ENCODE measurements at regions of chr22 and their contacts with region 1.

Region 1: DNA sequence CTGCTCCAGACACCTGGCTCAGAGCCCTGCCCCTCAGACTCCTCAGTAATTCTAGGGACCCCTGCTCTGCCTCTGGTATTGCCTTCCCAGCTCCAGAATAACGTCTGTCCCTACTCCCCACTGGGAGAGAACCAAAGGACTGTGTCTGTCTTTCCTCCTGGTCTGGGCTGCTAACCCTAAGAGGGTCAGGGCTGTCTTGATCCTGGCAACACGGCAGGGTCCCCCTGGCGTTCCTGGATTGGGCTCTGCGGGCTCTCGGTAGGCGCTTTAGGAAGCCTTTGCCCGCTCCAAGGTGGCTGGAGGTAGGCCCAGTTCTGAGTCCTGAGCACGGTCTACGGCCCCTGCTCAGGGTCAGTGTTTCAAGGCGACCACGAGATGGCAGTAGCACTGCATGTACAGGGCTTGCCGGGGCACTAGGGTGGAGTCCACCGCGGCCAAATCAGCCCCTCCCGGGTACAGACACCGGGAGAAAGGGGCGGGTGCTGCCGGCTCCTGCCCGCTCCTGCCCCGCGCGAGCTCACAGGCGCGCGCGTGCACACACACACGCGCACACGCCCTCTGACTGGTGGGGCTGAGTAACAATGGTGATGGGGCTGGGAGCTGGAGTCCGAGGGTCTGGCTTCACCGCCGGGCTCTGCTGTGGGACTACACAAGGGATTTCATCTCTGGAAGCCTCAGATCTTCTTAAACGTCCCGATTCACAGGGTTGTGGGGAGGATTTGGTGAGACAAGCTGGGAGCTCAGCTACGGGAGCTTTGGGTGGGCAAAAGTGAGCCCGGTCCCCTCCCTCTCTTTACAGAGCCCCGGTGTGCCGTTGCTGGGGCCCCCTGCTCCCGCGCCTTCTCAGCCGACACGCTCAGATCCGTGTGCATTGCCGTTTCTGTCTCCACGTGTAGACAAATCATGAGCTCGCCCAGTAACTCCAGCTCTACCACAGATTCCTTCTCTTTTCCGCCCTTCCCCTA is 30.1 kb upstream of the HMOX1 start:
- DNase-seq: peak; percentile 58
- ATAC-seq: peak; percentile 90
- H3K4me3 ChIP-seq: peak overlapping the region; percentile 77
- H3K27ac ChIP-seq: peak overlapping the region; percentile 18; the same call in 1 of the 2 replicates
- H3K4me1 ChIP-seq: peaks cover 34% of the 10 kb centered on the region
- H3K27me3 ChIP-seq: no peaks in the 10 kb centered on the region
- CTCF ChIP-seq: peak; percentile 80 to 97 (median 87)
- EP300 ChIP-seq: no peak
- POLR2A ChIP-seq: no peak
- RAD21 ChIP-seq: peak; percentile 94

Region 2: DNA sequence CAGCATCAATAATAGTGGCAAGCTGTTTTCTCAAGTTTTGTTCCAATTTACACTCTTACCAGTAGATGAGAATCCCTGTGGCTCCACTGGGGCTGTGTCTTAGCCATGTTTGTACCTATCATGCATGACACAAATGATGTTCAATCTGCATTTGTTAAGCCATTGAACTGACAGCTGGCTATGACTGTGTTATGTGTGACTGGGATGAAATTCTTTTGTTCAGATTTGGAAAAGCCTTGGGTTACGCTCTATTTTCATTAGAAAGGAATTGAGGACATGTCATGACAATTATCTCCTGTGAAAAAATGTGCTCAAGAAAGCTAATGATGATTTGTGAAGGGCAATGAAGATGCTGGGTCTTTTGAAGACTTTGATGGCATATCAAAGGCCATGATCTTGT is 1228.8 kb before region 1 on chr22:
- CTCF ChIA-PET with region 1: no interaction called
- POLR2A ChIA-PET with region 1: no interaction called
- RAD21 ChIA-PET with region 1: no interaction called
- SMC1A ChIA-PET with region 1: no interaction called
- in situ Hi-C with region 1: no loop called
- intact Hi-C with region 1: no loop called
- DNase-seq: no peak
- ATAC-seq: no peak
- H3K4me3 ChIP-seq: no peak overlapping the region
- H3K27ac ChIP-seq: no peak overlapping the region
- H3K4me1 ChIP-seq: no peaks in the 10 kb centered on the region
- H3K27me3 ChIP-seq: no peaks in the 10 kb centered on the region
- CTCF ChIP-seq: no peak
- EP300 ChIP-seq: no peak
- POLR2A ChIP-seq: no peak
- RAD21 ChIP-seq: no peak

Region 3: DNA sequence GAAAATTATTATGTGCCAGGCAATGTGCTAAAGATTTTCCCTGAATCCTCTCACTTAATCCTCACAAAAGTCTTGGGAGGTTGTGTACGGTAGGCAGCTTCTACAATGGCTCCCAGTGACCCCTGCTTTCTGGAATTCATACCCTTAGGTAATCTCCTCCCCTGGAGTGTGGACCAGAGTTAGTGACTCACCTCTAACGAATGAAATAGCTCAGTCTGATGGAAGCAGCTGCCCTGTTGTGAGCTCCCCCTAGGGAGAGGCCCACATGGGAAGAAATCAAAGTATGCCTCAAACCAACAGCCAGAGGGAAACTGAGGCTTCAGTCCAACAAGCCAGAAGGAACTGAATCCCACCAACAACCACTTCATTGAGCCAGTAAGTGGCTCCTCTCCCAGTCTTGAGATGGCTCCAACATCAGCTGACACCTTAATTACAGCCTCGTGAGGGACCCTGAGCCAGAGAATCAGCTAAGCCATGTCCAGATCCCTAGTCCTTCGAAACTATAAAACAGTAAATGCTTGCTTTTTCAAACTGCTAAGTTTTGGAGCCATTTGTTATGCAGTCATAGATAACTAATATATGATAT is 383.7 kb before region 1 on chr22:
- CTCF ChIA-PET with region 1: no interaction called
- POLR2A ChIA-PET with region 1: no interaction called
- RAD21 ChIA-PET with region 1: no interaction called
- SMC1A ChIA-PET with region 1: no interaction called
- in situ Hi-C with region 1: no loop called
- intact Hi-C with region 1: no loop called
- DNase-seq: no peak
- ATAC-seq: no peak
- H3K4me3 ChIP-seq: no peak overlapping the region
- H3K27ac ChIP-seq: no peak overlapping the region
- H3K4me1 ChIP-seq: no peaks in the 10 kb centered on the region
- H3K27me3 ChIP-seq: no peaks in the 10 kb centered on the region
- CTCF ChIP-seq: no peak
- EP300 ChIP-seq: no peak
- POLR2A ChIP-seq: no peak
- RAD21 ChIP-seq: no peak

Region 4: DNA sequence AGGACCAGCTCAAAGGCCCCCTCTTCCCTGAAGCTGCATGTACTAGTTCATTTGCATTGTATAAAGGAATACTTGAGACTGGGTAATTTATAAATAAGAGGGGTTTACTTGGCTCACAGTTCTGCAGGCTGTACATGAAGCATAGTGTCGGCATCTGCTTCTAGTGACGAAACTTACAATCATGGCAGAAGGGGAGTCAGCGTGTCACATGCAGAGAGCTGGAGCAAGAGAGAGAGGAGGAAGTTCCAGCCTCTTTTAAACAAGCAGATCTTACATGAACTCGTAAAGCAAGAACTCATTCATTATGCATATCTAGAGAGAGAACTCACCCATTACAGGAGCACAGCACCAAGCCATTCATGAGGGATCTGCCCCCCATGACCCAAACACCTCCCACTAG is 100.7 kb before region 1 on chr22:
- CTCF ChIA-PET with region 1: no interaction called
- POLR2A ChIA-PET with region 1: no interaction called
- RAD21 ChIA-PET with region 1: no interaction called
- SMC1A ChIA-PET with region 1: no interaction called
- in situ Hi-C with region 1: no loop called
- intact Hi-C with region 1: no loop called
- DNase-seq: no peak
- ATAC-seq: no peak
- H3K4me3 ChIP-seq: no peak overlapping the region
- H3K27ac ChIP-seq: no peak overlapping the region
- H3K4me1 ChIP-seq: no peaks in the 10 kb centered on the region
- H3K27me3 ChIP-seq: no peaks in the 10 kb centered on the region
- CTCF ChIP-seq: no peak
- EP300 ChIP-seq: no peak
- POLR2A ChIP-seq: no peak
- RAD21 ChIP-seq: no peak

Region 5: GRCh38 chr22:35318346-35319215 is 32.2 kb before region 1 on chr22:
- CTCF ChIA-PET with region 1: no interaction called
- POLR2A ChIA-PET with region 1: no interaction called
- RAD21 ChIA-PET with region 1: no interaction called
- SMC1A ChIA-PET with region 1: no interaction called
- in situ Hi-C with region 1: no loop called
- intact Hi-C with region 1: no loop called
- DNase-seq: no peak
- ATAC-seq: no peak
- H3K4me3 ChIP-seq: no peak overlapping the region
- H3K27ac ChIP-seq: no peak overlapping the region
- H3K4me1 ChIP-seq: peaks cover 8% of the 10 kb centered on the region
- H3K27me3 ChIP-seq: no peaks in the 10 kb centered on the region
- CTCF ChIP-seq: no peak
- EP300 ChIP-seq: no peak
- POLR2A ChIP-seq: no peak
- RAD21 ChIP-seq: no peak

Region 6: DNA sequence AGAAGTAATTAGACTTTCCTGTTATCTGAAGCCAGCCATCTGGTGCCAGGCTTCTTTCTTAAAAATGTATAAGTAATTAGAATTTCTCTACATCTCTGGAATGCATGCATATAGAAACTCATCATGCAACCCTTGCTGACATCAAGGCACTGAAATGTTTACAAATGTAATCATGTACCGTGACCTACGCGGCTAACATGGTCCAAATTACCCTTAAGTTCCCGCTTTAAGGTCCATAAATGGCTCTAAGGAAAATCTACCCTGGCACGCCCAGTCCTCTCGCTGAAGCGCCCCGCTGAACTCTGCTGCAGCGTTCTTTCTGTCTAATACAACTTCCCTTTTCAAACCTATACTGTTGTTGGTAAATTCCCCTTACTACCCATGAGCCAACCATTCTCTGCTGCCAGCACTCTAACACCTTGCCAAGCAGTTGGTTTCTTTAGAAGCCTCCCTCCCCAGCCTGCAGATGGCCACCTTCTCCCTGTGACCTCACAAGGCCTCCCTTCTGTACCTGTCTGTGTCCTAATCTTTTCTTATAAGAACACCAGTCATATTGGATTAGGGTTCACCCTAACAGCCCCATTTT is 16.6 kb after region 1 on chr22:
- CTCF ChIA-PET with region 1: interaction called, 10 read pairs
- POLR2A ChIA-PET with region 1: interaction called, 7 read pairs
- RAD21 ChIA-PET with region 1: interaction called, 6 read pairs
- SMC1A ChIA-PET with region 1: interaction called, 10 read pairs
- in situ Hi-C with region 1: no loop called
- intact Hi-C with region 1: no loop called
- DNase-seq: peak; percentile 65
- ATAC-seq: peak; percentile 90
- H3K4me3 ChIP-seq: no peak overlapping the region
- H3K27ac ChIP-seq: no peak overlapping the region
- H3K4me1 ChIP-seq: peaks cover 19% of the 10 kb centered on the region
- H3K27me3 ChIP-seq: no peaks in the 10 kb centered on the region
- CTCF ChIP-seq: peak in 2 of 3 experiments; percentile 7 to 42; a peak in 2 of 6 replicates
- EP300 ChIP-seq: no peak
- POLR2A ChIP-seq: no peak
- RAD21 ChIP-seq: no peak

Region 7: DNA sequence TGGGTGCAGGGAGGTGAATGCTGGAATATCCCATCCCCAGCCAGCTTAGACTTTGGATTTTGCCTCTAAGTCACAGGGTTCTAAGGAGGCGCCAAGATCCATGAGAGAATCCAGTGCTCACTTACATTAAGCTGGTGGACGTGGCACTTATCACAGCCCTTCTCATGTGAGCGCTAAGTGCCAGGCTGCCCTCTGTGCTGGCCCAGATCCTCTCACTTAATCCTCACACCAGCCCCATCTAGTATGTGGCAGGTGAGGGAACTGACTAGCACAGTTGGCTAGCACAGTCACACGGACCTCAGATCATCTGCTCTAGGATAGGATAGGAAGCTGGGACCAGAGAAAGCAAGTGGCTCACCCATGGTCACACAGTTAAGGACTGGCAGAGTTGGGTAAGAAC is 33.7 kb after region 1 on chr22:
- CTCF ChIA-PET with region 1: interaction called, 23 read pairs
- POLR2A ChIA-PET with region 1: no interaction called
- RAD21 ChIA-PET with region 1: interaction called, 23 read pairs
- SMC1A ChIA-PET with region 1: interaction called, 12 read pairs
- in situ Hi-C with region 1: no loop called
- intact Hi-C with region 1: no loop called
- DNase-seq: no peak
- ATAC-seq: peak; percentile 33
- H3K4me3 ChIP-seq: no peak overlapping the region
- H3K27ac ChIP-seq: no peak overlapping the region
- H3K4me1 ChIP-seq: peaks cover 8% of the 10 kb centered on the region; the same call in 1 of the 2 replicates
- H3K27me3 ChIP-seq: no peaks in the 10 kb centered on the region
- CTCF ChIP-seq: no peak
- EP300 ChIP-seq: no peak
- POLR2A ChIP-seq: no peak
- RAD21 ChIP-seq: no peak

Region 8: GRCh38 chr22:35409783-35410662 is 59.2 kb after region 1 on chr22:
- CTCF ChIA-PET with region 1: interaction called, 78 read pairs
- POLR2A ChIA-PET with region 1: interaction called, 18 read pairs
- RAD21 ChIA-PET with region 1: interaction called, 112 read pairs
- SMC1A ChIA-PET with region 1: interaction called, 67 read pairs
- in situ Hi-C with region 1: no loop called
- intact Hi-C with region 1: loop called (anchors 1 kb)
- DNase-seq: peak; percentile 91
- ATAC-seq: peak; percentile 91
- H3K4me3 ChIP-seq: peak overlapping the region; percentile 45; the same call in 1 of the 2 replicates
- H3K27ac ChIP-seq: peak overlapping the region; percentile 83
- H3K4me1 ChIP-seq: peaks cover 27% of the 10 kb centered on the region
- H3K27me3 ChIP-seq: no peaks in the 10 kb centered on the region
- CTCF ChIP-seq: no peak
- EP300 ChIP-seq: peak; percentile 53 to 76; a peak in 3 of 4 replicates
- POLR2A ChIP-seq: peak; percentile 65
- RAD21 ChIP-seq: peak; percentile 22; the same call in 1 of the 2 replicates

Region 9: GRCh38 chr22:35582861-35583670 is 232.2 kb after region 1 on chr22:
- CTCF ChIA-PET with region 1: interaction called, 91 read pairs
- POLR2A ChIA-PET with region 1: interaction called, 3 read pairs
- RAD21 ChIA-PET with region 1: interaction called, 30 read pairs
- SMC1A ChIA-PET with region 1: interaction called, 19 read pairs
- in situ Hi-C with region 1: loop called (anchors 5 kb)
- intact Hi-C with region 1: loop called (anchors 1 kb)
- DNase-seq: peak; percentile 7
- ATAC-seq: peak; percentile 93
- H3K4me3 ChIP-seq: no peak overlapping the region
- H3K27ac ChIP-seq: no peak overlapping the region
- H3K4me1 ChIP-seq: no peaks in the 10 kb centered on the region
- H3K27me3 ChIP-seq: no peaks in the 10 kb centered on the region; a peak in 1 of 4 replicates
- CTCF ChIP-seq: peak; percentile 87 to 94 (median 89)
- EP300 ChIP-seq: no peak
- POLR2A ChIP-seq: no peak
- RAD21 ChIP-seq: peak; percentile 86

Region 10: GRCh38 chr22:35627264-35628041 is 276.6 kb after region 1 on chr22:
- CTCF ChIA-PET with region 1: interaction called, 12 read pairs
- POLR2A ChIA-PET with region 1: interaction called, 3 read pairs
- RAD21 ChIA-PET with region 1: interaction called, 11 read pairs
- SMC1A ChIA-PET with region 1: interaction called, 3 read pairs
- in situ Hi-C with region 1: loop called (anchors 5 kb)
- intact Hi-C with region 1: loop called (anchors 1 kb)
- DNase-seq: no peak
- ATAC-seq: peak; percentile 70
- H3K4me3 ChIP-seq: peak overlapping the region; percentile 76
- H3K27ac ChIP-seq: peak overlapping the region; percentile 52; the same call in 1 of the 2 replicates
- H3K4me1 ChIP-seq: peaks cover 17% of the 10 kb centered on the region
- H3K27me3 ChIP-seq: no peaks in the 10 kb centered on the region
- CTCF ChIP-seq: peak; percentile 48 to 90 (median 54); a peak in 5 of 6 replicates
- EP300 ChIP-seq: no peak
- POLR2A ChIP-seq: no peak
- RAD21 ChIP-seq: peak; percentile 92

Region 11: DNA sequence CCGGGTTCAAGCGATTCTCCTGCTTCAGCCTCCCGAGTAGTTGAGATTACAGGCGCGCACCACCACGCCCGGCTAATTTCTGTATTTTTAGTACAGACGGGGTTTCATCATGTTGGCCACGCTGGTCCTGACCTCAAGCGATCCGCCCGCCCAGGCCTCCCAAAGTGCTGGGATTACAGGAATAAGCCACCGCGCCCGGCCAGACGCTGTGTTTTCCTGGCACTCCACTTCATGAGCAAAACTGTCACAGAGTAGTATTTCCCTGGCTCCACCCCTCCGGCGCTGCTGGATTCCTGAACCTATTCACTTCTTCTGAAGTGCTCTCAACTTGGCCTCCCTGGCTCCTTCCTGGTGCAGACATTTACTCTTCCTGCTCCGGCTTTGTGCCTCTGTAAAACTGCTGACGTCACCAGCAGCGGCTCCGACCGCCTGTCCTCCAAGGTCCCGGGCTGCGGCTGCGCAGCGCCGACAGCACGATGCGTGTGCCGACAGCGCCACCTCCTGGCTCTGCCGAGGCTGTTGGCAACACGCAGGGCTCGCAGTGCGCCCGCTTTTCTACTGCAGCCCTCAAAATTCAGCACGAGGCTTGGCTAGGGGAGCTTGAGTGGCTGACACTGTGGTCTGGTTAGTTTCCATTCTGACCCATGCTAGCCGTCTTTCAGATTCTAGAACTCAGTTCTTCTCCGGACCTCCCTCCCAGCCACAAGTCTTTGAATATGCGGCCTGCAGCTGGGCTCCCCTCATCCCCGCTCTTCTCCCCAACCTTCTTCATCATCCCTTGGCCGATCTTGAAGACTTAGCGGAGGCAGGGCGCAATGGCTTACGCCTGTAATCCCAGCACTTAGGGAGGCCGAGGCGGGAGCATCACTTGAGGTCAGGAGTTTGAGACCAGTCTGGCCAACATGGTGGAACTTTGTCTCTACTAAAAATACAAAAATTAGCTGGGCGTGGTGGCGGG is 773.1 kb after region 1 on chr22:
- CTCF ChIA-PET with region 1: interaction called, 3 read pairs
- POLR2A ChIA-PET with region 1: no interaction called
- RAD21 ChIA-PET with region 1: no interaction called
- SMC1A ChIA-PET with region 1: no interaction called
- in situ Hi-C with region 1: loop called (anchors 10 kb)
- intact Hi-C with region 1: loop called (anchors 2 kb)
- DNase-seq: peak; percentile 52
- ATAC-seq: peak; percentile 100
- H3K4me3 ChIP-seq: peak overlapping the region; percentile 26; the same call in 1 of the 2 replicates
- H3K27ac ChIP-seq: no peak overlapping the region
- H3K4me1 ChIP-seq: no peaks in the 10 kb centered on the region
- H3K27me3 ChIP-seq: no peaks in the 10 kb centered on the region
- CTCF ChIP-seq: peak; percentile 98 to 99 (median 99); a peak in 5 of 6 replicates
- EP300 ChIP-seq: no peak
- POLR2A ChIP-seq: 0 out of 2 replicates have a peak, but pooled peaks have one; percentile 30
- RAD21 ChIP-seq: peak; percentile 96